ENCODE measurements at regions of chr7 and their contacts with region 1.

Region 1: DNA sequence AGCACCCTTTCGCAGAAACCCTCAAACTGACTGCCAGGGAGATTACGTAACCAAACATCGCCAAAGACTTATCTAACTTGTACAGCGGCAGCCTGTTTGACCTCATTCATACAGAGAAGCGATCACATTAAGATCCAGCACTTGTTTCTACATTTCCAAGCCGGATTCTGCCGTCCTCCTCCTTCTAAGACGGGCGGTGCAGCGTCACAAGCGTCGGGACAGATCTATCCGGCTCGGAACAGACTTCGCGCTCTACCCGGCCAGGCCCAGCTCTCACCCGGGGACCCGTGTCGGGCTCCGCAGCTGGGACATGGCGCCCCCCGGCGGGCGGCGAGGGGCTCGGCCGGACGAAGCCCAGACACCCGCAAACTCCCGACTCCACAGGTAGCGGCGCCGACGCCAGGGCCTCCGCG is 373 bp downstream of the H2AZ2 start:
- DNase-seq: peak; percentile 86 to 92
- H3K4me3 ChIP-seq: peak overlapping the region; percentile 61
- H3K4me3 Mint-ChIP-seq: peak overlapping the region; percentile 95
- H3K27ac Mint-ChIP-seq: peak overlapping the region; percentile 99
- H3K4me1 ChIP-seq: no peaks in the 10 kb centered on the region
- H3K4me1 Mint-ChIP-seq: peaks cover 10% of the 10 kb centered on the region
- H3K27me3 ChIP-seq: no peaks in the 10 kb centered on the region
- H3K27me3 Mint-ChIP-seq: no peaks in the 10 kb centered on the region
- CTCF ChIP-seq: peak; percentile 87 to 89

Region 2: DNA sequence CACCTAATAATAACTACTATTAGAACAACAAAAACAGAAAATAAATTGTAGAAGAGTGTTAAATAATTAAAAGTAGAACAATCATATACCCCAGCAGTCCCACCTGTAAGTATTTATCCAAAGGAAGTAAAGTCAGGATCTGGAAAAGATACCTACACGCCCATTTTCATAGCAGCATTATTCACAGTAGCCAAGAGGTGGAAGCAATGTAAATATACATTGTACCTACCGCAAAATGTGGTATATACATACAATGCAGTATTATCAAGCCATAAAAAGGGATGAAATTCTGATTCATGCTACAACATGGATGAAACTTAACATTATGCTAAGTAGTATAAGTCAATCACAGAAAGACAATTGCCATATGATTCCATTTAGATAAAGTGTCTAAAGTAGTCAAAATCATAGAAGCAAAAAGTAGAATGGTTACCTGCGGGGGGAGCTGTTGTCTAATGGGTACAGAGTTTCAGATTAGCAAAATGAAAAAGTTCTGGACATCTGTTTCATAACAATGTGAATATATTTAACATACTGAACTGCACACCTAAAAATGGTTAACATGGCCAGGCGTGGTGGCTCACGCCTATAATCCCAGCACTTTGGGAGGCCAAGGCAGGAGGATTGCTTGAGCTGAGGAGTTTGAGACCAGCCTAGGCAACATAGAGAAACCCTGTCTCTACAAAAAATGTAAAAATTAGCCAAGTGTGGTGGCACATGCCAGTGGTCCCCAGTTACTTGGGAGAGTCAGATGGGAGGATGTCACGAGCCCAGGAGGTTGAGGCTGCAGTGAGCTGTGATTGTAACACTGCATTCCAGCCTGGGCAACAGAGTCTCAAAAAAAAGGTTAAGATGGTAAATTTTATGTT is 259.4 kb before region 1 on chr7:
- CTCF ChIA-PET with region 1: interaction called, 3 read pairs
- POLR2A ChIA-PET with region 1: no interaction called
- intact Hi-C with region 1: loop called (anchors 1 kb)
- DNase-seq: peak in 1 of 2 experiments; percentile 66
- H3K4me3 ChIP-seq: no peak overlapping the region
- H3K4me3 Mint-ChIP-seq: no peak overlapping the region
- H3K27ac Mint-ChIP-seq: peak overlapping the region; percentile 55
- H3K4me1 ChIP-seq: 0 out of 2 replicates have a peak, but pooled peaks cover 1% of the 10 kb centered on the region
- H3K4me1 Mint-ChIP-seq: peaks cover 5% of the 10 kb centered on the region
- H3K27me3 ChIP-seq: no peaks in the 10 kb centered on the region
- H3K27me3 Mint-ChIP-seq: peaks cover 1% of the 10 kb centered on the region
- CTCF ChIP-seq: peak; percentile 60 to 68

Region 3: DNA sequence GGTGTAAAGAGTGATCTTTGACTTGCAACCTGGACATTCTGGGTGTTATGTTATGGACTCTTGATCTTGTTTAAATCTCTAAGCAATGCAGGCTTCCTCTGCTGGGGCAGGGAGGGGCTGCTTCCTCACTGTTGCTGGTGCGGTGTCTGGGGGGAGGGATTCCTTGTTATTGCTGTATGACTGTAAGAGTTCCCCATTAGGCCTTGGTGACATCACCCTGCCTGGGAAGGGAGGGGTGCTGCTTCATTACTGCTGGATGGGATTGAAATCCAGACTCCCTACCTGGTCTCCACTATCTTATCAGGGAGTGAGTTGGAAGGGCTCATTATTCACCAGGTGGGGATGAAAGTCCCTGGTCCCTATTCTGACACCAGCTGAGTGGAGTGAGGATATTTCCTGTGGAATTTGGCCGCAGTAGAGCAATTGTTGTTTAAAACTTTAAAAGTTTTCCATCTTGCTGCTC is 232.3 kb before region 1 on chr7:
- CTCF ChIA-PET with region 1: no interaction called
- POLR2A ChIA-PET with region 1: no interaction called
- intact Hi-C with region 1: no loop called
- DNase-seq: peak; percentile 44 to 85
- H3K4me3 ChIP-seq: no peak overlapping the region
- H3K4me3 Mint-ChIP-seq: peak overlapping the region; percentile 39
- H3K27ac Mint-ChIP-seq: peak overlapping the region; percentile 93
- H3K4me1 ChIP-seq: peaks cover 54% of the 10 kb centered on the region
- H3K4me1 Mint-ChIP-seq: peaks cover 39% of the 10 kb centered on the region
- H3K27me3 ChIP-seq: no peaks in the 10 kb centered on the region
- H3K27me3 Mint-ChIP-seq: no peaks in the 10 kb centered on the region
- CTCF ChIP-seq: no peak

Region 4: GRCh38 chr7:44769776-44770662 is 77.5 kb before region 1 on chr7:
- CTCF ChIA-PET with region 1: interaction called, 3 read pairs
- POLR2A ChIA-PET with region 1: no interaction called
- intact Hi-C with region 1: loop called (anchors 5 kb)
- DNase-seq: no peak
- H3K4me3 ChIP-seq: no peak overlapping the region
- H3K4me3 Mint-ChIP-seq: no peak overlapping the region
- H3K27ac Mint-ChIP-seq: no peak overlapping the region
- H3K4me1 ChIP-seq: peaks cover 16% of the 10 kb centered on the region
- H3K4me1 Mint-ChIP-seq: peaks cover 16% of the 10 kb centered on the region
- H3K27me3 ChIP-seq: no peaks in the 10 kb centered on the region
- H3K27me3 Mint-ChIP-seq: no peaks in the 10 kb centered on the region
- CTCF ChIP-seq: no peak

Region 5: GRCh38 chr7:44885394-44886317 is 38.1 kb after region 1 on chr7 and contains the start of gene PURB:
- CTCF ChIA-PET with region 1: interaction called, 3 read pairs
- POLR2A ChIA-PET with region 1: interaction called, 7 read pairs
- intact Hi-C with region 1: loop called (anchors 2 kb)
- DNase-seq: peak; percentile 92 to 95
- H3K4me3 ChIP-seq: peak within 1 kb of the TSS; percentile 78
- H3K4me3 Mint-ChIP-seq: peak within 1 kb of the TSS; percentile 96
- H3K27ac Mint-ChIP-seq: peak within 1 kb of the TSS; percentile 100
- H3K4me1 ChIP-seq: peaks cover 26% of the 10 kb centered on the region
- H3K4me1 Mint-ChIP-seq: peaks cover 17% of the 10 kb centered on the region
- H3K27me3 ChIP-seq: no peaks in the 10 kb centered on the region
- H3K27me3 Mint-ChIP-seq: no peaks in the 10 kb centered on the region
- CTCF ChIP-seq: no peak
- total RNA-seq, gene PURB: 25.1 and 26.3 TPM in 2 replicates

Region 6: DNA sequence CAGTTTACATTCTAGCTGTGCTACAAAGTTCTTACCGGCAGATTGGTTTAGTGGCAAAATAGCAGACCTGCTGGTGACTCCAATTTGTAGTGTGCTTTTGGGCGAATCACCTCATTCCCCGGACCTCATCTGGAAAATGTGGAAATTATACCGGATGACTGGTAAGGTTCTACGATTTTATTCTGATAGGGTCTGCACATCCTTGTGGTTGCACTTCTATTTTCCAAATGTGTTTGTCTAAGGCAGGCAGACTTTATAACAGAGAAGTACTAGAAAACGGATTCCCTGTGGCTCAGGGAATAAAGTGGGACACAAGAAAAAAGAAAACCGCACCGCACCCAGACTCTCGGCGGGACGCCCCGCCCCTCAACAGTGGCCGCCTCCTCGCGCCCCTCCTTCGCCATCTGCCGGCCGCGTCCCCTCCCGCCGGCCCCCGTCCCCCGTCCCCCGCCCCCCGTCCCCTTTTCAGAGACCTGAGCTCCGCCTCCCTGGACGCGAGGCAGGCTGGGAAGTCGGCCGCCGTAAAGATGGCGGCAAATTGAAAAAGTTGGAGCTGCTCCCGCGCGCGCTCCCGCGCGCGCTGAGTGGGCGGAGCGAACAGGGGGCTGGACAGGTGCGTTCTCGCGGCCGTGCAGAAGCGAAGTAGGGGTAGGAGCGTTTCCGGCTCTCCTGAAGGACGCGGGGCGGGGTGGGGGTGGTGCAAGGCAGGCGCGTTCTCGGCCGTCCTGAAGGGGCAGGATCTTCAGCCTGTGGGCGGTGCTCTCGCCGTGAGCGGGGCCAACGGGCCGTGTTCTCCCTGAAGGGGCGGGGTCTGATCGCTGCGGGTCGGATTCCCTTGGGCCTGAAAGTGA is 152.0 kb after region 1 on chr7:
- CTCF ChIA-PET with region 1: no interaction called
- POLR2A ChIA-PET with region 1: interaction called, 16 read pairs
- intact Hi-C with region 1: no loop called
- DNase-seq: peak; percentile 100
- H3K4me3 ChIP-seq: peak overlapping the region; percentile 73
- H3K4me3 Mint-ChIP-seq: peak overlapping the region; percentile 79
- H3K27ac Mint-ChIP-seq: peak overlapping the region; percentile 95
- H3K4me1 ChIP-seq: peaks cover 15% of the 10 kb centered on the region
- H3K4me1 Mint-ChIP-seq: peaks cover 16% of the 10 kb centered on the region
- H3K27me3 ChIP-seq: no peaks in the 10 kb centered on the region
- H3K27me3 Mint-ChIP-seq: no peaks in the 10 kb centered on the region
- CTCF ChIP-seq: peak in 1 of 2 experiments; percentile 16